ENCODE measurements at regions of chr12 and their contacts with region 1.

Region 1: GRCh38 chr12:108664338-108665258 is 30.9 kb upstream of the SELPLG start:
- DNase-seq: peak; percentile 92
- H3K4me3 ChIP-seq: peak overlapping the region; percentile 46
- H3K27ac ChIP-seq: peak overlapping the region; percentile 94
- H3K4me1 ChIP-seq: peaks cover 83% of the 10 kb centered on the region
- CTCF ChIP-seq: peak; percentile 99

Region 2: DNA sequence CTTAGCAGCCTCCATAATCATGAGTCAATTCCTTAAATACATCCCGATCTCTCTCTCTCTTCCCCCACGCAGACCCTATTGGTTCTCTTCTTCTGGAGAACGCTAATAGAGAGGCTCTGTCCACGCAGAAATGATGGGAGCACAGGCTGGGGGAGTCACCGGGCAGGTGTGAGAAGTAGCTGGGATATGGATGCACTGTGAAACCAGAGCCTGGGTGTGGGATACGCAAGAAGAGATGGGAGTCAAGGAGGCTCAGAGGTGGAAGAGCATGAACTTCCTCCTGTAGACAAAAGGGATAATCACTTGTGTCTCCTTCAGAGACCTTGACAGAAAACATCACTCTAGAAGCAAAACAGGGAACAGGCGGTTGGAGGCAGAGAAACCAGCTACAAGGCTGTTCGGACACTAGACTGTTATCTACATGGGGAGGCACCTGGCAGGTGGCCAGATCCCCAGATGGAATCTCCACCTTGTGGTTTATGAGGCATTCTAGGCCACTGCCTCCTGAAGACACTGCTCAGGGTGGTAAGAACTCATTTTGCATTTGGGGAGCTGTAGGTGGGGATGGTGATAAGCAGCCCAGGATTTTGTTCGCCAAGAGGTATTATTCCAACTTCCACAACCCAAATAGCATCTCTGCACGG is 23.7 kb before region 1 on chr12:
- CTCF ChIA-PET with region 1: interaction called, 6 read pairs
- POLR2A ChIA-PET with region 1: interaction called, 330 read pairs
- intact Hi-C with region 1: loop called (anchors 1 kb)
- DNase-seq: peak; percentile 89
- H3K4me3 ChIP-seq: peak overlapping the region; percentile 41
- H3K27ac ChIP-seq: peak overlapping the region; percentile 99
- H3K4me1 ChIP-seq: peaks cover 92% of the 10 kb centered on the region
- CTCF ChIP-seq: no peak

Region 3: GRCh38 chr12:108678104-108678730 is 13.6 kb after region 1 on chr12:
- CTCF ChIA-PET with region 1: interaction called, 6 read pairs
- POLR2A ChIA-PET with region 1: interaction called, 27 read pairs
- intact Hi-C with region 1: no loop called
- DNase-seq: no peak
- H3K4me3 ChIP-seq: no peak overlapping the region
- H3K27ac ChIP-seq: no peak overlapping the region
- H3K4me1 ChIP-seq: peaks cover 11% of the 10 kb centered on the region
- CTCF ChIP-seq: no peak

Region 4: GRCh38 chr12:108731105-108731865 is 66.7 kb after region 1 on chr12 and contains the start of gene CORO1C:
- CTCF ChIA-PET with region 1: interaction called, 3 read pairs
- POLR2A ChIA-PET with region 1: interaction called, 5 read pairs
- intact Hi-C with region 1: loop called (anchors 1 kb)
- DNase-seq: peak; percentile 96
- H3K4me3 ChIP-seq: peak within 1 kb of the TSS; percentile 90
- H3K27ac ChIP-seq: peak within 1 kb of the TSS; percentile 74
- H3K4me1 ChIP-seq: peaks cover 41% of the 10 kb centered on the region
- CTCF ChIP-seq: peak; percentile 85
- total RNA-seq, gene CORO1C: 74.7 and 76.3 TPM in 2 replicates

Region 5: GRCh38 chr12:108950991-108951739 is 286.6 kb after region 1 on chr12:
- CTCF ChIA-PET with region 1: no interaction called
- POLR2A ChIA-PET with region 1: interaction called, 9 read pairs
- intact Hi-C with region 1: loop called (anchors 2 kb)
- DNase-seq: peak; percentile 83
- H3K4me3 ChIP-seq: no peak overlapping the region
- H3K27ac ChIP-seq: no peak overlapping the region
- H3K4me1 ChIP-seq: peaks cover 20% of the 10 kb centered on the region
- CTCF ChIP-seq: peak; percentile 99